ENCODE measurements at regions of chr1 and their contacts with region 1.

Region 1: DNA sequence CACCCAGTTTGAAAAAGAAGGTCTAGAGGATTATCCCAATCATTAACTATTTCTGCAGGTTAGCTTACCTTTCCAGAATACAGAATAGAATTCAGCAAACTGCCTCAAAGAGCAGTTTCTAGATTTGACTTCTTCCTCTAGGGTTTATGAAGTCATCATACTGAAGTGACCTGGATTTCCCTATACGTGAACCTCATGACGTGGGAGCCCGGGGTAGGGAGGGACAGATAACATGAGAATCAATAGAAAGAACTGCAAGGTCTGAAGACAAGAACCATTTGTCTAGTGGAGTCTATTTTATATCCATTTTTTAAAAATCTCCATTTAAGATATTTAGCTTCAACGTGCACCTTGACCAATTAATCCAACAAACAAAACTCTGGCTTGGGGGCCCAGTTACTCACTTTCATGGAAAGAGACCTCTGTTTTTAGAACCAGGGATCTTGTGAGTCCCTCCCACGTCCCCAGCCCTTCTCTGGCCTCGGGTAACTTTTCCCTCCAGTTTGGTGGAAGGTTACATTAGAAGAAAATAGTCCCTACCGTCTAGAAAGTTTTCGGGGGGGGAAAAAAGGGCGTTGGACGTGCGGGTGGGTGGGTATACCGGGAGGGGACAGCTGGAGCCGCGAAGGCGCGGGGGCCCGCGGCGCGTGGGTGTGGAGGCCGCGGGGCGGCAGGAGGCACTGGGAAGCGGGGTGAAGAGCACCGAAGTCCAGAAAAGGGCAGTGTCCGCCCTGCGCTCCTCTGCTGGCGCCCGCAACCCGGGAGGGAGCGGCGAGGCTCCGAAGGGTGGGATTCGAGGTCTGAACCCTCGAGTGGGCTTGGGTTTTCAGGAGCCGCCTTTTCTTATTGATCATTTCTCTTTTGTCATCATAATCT is 13.8 kb upstream of the POGZ start:
- DNase-seq: peak; percentile 48
- H3K4me3 Mint-ChIP-seq: peak overlapping the region; percentile 70
- H3K27ac Mint-ChIP-seq: peak overlapping the region; percentile 64
- H3K4me1 Mint-ChIP-seq: peaks cover 9% of the 10 kb centered on the region
- H3K27me3 Mint-ChIP-seq: no peaks in the 10 kb centered on the region
- CTCF ChIP-seq: no peak

Region 2: GRCh38 chr1:151459331-151460046 is 13.6 kb before region 1 on chr1 and contains the start of gene POGZ:
- CTCF ChIA-PET with region 1: interaction called, 4 read pairs
- intact Hi-C with region 1: loop called (anchors 1 kb)
- DNase-seq: peak; percentile 98
- H3K4me3 Mint-ChIP-seq: peak within 1 kb of the TSS; percentile 78
- H3K27ac Mint-ChIP-seq: peak within 1 kb of the TSS; percentile 98
- H3K4me1 Mint-ChIP-seq: no peaks in the 10 kb centered on the region
- H3K27me3 Mint-ChIP-seq: no peaks in the 10 kb centered on the region
- CTCF ChIP-seq: no peak
- total RNA-seq, gene POGZ: 118 and 128 TPM in 2 replicates

Region 3: DNA sequence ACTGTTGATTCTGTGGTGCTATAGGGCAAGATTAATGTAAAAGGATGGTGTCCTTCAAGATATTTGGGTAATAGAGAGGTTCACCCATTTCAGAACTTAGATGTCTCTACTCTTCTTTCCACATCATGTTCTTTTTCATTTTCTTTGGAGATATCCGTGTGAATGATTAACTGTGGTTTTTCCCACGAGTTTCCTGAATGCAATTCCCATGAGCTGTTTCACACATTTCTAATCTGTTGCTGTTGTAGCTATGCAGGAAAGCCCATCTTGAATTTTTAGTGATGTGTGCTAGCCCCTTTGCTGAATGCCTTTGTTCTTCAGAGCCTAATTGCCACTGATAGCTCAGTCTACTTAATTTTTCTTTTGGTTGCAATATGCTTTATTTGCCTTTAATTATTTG is 166.4 kb after region 1 on chr1:
- CTCF ChIA-PET with region 1: no interaction called
- intact Hi-C with region 1: no loop called
- DNase-seq: peak; percentile 15
- H3K4me3 Mint-ChIP-seq: peak overlapping the region; percentile 66
- H3K27ac Mint-ChIP-seq: peak overlapping the region; percentile 90
- H3K4me1 Mint-ChIP-seq: peaks cover 37% of the 10 kb centered on the region
- H3K27me3 Mint-ChIP-seq: no peaks in the 10 kb centered on the region
- CTCF ChIP-seq: no peak